Activated B cell treated with CpG ODN at 0.5 μM for 24 hours (primary cell): ENCODE measurements at regions of chr6 and their contacts with region 1.

Region 1: GRCh38 chr6:37432916-37433656 is at the start of gene CMTR1:
- DNase-seq: peak; percentile 99
- ATAC-seq: peak; percentile 89
- H3K4me3 Mint-ChIP-seq: peak within 1 kb of the TSS; percentile 95
- H3K27ac Mint-ChIP-seq: peak within 1 kb of the TSS; percentile 97
- H3K4me1 Mint-ChIP-seq: peaks cover 34% of the 10 kb centered on the region
- H3K27me3 Mint-ChIP-seq: peaks cover 2% of the 10 kb centered on the region
- CTCF ChIP-seq: no peak
- total RNA-seq, gene CMTR1: 59.0 and 65.7 TPM in 2 replicates

Region 2: DNA sequence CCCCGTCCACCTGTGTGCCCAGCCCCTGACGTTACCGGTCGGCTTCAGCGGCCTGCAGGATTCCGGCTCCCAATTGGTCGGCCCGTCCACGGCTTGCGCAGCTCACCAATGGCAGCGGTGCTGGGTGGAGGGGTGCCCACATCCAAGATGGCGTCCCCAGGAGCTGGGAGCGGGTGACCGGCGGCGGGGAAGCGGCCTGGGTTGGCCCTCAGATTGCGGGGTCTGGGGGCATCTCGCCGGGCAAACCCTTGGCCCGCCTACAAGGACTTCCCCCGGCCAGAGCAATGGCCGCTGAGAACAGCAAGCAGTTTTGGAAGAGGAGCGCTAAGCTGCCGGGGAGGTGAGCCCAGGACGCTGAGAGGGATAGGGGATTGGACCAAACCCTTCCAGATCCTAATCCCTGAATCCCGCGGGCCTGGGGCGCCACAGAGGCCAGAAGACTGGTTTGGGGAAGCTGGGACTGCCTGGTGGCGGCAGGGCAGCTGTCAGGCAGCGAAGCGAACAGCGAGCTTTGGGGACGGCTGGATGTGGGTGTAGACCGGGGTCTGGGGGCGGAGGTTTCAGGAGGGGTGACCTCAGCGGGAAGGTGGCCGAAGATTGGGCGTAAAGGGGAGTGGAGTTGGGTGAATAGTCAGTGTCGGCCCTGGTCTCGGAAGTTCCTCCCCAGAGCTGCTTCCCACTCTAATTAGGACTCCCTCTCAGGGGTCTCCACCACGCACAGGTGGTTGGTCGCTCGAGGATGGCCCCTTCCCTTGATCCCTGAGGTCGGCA is 175.3 kb before region 1 on chr6 and contains the starts of genes TBC1D22B and TMEM217:
- CTCF ChIA-PET with region 1: no interaction called
- POLR2A ChIA-PET with region 1: interaction called, 8 read pairs
- intact Hi-C with region 1: loop called (anchors 5 kb)
- DNase-seq: peak; percentile 90
- ATAC-seq: peak; percentile 100
- H3K4me3 Mint-ChIP-seq: peak within 1 kb of the TSS; percentile 96
- H3K27ac Mint-ChIP-seq: peak within 1 kb of the TSS; percentile 88
- H3K4me1 Mint-ChIP-seq: peaks cover 38% of the 10 kb centered on the region
- H3K27me3 Mint-ChIP-seq: no peaks in the 10 kb centered on the region
- CTCF ChIP-seq: no peak
- total RNA-seq, gene TBC1D22B: 10.7 and 11.1 TPM in 2 replicates
- total RNA-seq, gene TMEM217: 0.54 and 1.0 TPM in 2 replicates

Region 3: DNA sequence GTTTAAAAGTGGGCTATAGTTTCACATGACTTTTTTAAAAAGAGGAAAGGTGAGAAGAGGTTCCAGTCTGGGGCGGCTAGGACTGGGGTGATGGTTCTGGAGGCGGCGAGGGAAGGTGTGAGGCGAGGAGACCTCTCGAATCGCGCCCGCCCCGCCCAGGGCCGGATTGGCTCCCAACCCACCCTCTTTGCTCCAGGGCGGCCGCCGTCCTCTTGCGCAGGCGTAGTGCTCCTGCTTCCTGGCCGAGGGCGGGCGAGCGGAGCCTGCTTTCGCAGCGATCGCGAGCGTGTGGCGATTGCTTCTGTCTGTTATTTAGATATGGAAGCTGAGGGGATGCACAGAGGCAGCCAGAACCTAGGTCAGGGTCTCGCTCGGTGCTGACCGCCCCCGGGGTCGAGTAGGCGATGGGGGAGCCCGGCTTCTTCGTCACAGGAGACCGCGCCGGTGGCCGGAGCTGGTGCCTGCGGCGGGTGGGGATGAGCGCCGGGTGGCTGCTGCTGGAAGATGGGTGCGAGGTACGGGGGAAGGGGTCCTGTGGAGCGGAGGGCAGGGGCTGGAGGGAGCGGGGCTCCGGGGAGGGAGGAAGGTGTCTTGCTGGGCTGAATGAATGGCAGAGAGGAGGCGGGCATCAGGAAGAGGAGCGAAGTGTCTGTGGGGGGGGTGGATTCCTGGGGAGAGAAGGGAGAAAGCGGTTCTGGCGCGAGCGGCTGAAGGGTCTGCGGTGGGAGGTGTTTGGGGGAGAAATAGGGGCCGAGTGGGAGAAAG is 79.1 kb before region 1 on chr6 and contains the start of gene RNF8:
- CTCF ChIA-PET with region 1: no interaction called
- POLR2A ChIA-PET with region 1: interaction called, 11 read pairs
- intact Hi-C with region 1: loop called (anchors 1 kb)
- DNase-seq: peak; percentile 88
- ATAC-seq: peak; percentile 98
- H3K4me3 Mint-ChIP-seq: peak within 1 kb of the TSS; percentile 94
- H3K27ac Mint-ChIP-seq: peak within 1 kb of the TSS; percentile 80
- H3K4me1 Mint-ChIP-seq: peaks cover 20% of the 10 kb centered on the region
- H3K27me3 Mint-ChIP-seq: no peaks in the 10 kb centered on the region
- CTCF ChIP-seq: no peak
- total RNA-seq, gene RNF8: 18.7 and 18.8 TPM in 2 replicates

Region 4: DNA sequence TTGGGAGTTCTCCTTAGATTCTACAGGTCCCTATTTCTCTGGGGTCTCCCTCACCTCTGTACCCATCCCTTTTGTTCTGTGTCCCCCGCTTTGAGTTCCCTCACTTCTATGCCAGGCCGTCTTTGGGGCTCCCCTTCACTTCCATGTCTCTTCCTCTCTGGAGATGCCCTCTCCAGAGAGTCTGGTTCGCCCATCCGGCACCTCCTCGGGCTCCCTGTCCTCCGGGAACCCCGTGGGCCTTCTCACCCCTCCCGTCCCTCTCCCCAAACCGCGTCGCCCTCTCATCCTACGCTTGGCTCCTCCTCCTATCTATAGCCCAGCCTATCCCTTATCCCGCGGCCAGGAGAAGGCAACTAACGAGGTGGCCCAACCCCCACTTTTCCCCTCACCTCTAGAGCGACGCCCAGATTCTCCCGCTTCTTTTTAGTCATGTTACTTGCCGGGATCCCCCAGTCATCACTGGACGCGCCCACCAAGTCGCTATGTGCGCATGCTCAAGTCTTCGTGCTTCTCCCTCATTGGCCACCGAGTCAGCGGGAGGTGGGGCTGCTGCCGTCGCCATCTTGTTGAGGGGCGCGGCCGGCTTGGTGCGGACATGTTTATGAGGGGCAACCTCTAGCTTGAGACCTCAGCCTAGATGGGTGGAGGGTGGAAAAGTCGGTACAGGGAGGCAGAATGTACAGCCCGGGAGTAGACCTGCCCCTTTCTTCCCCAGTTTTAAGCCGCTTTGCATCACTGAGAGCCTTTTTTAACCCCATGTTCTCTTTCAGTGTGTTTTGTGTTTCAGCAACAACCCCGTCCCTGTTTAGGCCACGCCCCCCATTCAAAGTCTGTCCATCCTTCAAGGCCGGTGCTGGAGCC is 66.6 kb after region 1 on chr6 and contains the start of gene CCDC167:
- CTCF ChIA-PET with region 1: no interaction called
- POLR2A ChIA-PET with region 1: interaction called, 8 read pairs
- intact Hi-C with region 1: loop called (anchors 1 kb)
- DNase-seq: peak; percentile 86
- ATAC-seq: peak; percentile 96
- H3K4me3 Mint-ChIP-seq: peak within 1 kb of the TSS; percentile 96
- H3K27ac Mint-ChIP-seq: peak within 1 kb of the TSS; percentile 82
- H3K4me1 Mint-ChIP-seq: peaks cover 65% of the 10 kb centered on the region
- H3K27me3 Mint-ChIP-seq: no peaks in the 10 kb centered on the region
- CTCF ChIP-seq: no peak
- total RNA-seq, gene CCDC167: 18.4 and 25.9 TPM in 2 replicates

Region 5: GRCh38 chr6:37878150-37878713 is 445.1 kb after region 1 on chr6:
- CTCF ChIA-PET with region 1: no interaction called
- POLR2A ChIA-PET with region 1: no interaction called
- intact Hi-C with region 1: no loop called
- DNase-seq: no peak
- ATAC-seq: no peak
- H3K4me3 Mint-ChIP-seq: no peak overlapping the region
- H3K27ac Mint-ChIP-seq: peak overlapping the region; percentile 15
- H3K4me1 Mint-ChIP-seq: peaks cover 68% of the 10 kb centered on the region
- H3K27me3 Mint-ChIP-seq: no peaks in the 10 kb centered on the region
- CTCF ChIP-seq: no peak

Region 6: DNA sequence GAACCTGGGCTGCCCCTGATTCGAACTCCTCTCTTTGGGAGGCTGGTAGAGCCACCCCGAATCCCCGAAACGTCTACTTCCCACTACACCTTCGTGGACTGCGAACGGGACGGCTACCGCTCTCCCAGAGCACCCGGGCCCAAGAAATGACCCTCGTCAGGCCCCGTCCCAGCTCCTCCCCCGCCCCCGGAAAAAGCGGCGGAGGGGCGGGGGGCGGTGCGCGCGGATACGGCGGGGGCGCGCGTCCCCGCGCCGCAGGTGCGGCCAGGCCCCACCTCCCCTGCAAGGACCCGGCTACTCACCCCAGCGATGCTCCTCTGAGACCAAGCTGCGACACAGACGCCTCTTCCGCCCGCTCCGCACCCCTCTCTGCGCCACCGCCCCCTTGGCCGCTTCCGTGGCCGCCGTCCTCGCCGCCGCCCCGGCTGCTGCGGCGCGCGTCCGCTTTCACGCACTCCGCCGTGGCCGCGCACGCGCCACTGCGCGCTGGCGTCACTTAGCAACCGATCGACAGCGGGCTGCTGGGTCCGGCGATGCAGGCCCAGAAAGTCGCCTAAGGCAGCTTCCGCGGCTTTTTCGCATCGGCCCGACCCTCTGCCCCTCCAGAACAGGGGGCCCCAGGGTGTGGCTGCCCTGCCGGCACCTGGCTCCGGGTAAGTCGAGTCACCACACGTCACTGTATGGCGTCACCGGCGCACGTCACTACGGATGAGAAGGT is 1206.6 kb after region 1 on chr6 and contains the start of gene BTBD9:
- CTCF ChIA-PET with region 1: no interaction called
- POLR2A ChIA-PET with region 1: no interaction called
- intact Hi-C with region 1: loop called (anchors 5 kb)
- DNase-seq: peak; percentile 92
- ATAC-seq: peak; percentile 86
- H3K4me3 Mint-ChIP-seq: peak within 1 kb of the TSS; percentile 94
- H3K27ac Mint-ChIP-seq: peak within 1 kb of the TSS; percentile 95
- H3K4me1 Mint-ChIP-seq: peaks cover 31% of the 10 kb centered on the region
- H3K27me3 Mint-ChIP-seq: no peaks in the 10 kb centered on the region
- CTCF ChIP-seq: no peak
- total RNA-seq, gene BTBD9: 19.4 and 25.7 TPM in 2 replicates